Pancreas (tissue), 10 donors: ENCODE measurements at regions of chr18 and their contacts with region 1.

Region 1: DNA sequence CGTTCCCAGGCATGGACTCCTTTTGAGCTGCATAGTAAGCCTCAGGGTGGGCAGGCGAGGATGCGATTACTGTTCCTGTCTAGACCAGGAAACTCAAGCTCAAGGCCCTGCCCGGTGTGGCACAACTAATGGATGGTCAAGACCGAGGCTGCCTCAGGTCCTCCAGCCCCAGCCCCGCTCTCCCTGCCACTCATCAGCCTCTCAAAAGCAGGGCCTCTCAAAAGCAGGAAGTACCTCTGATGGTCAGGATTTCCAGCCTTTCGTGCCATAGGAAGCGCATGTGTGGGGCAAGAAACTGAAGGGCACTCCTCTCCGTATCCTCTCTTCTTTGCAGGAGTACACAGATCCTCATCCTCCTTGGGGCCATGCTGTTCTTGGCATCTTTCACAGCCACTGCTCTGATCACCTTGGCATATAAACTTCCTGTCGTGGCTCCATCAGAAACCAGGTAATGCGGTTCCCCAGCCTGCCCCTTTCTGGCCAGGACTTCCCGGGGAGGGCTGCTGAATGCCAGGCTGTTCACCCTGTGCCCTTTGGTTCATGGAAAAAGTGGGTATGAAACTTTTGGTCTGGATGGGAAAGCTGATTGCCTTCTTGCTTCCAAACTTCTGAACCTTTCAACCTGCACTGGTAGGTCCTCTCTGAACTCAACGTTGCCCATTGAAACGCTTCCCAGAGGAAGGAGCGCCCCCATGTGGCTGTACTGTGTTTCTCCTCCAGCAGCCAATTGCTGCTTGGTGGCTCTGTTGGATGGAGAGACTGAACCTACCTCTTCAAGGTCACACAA is 82.8 kb upstream of the SEC11C start:
- DNase-seq: peak in 4 of 6 donors; percentile 46 to 87 (median 62)
- ATAC-seq: peak in 3 of 4 donors; percentile 32 to 78 (median 69)
- H3K4me3 ChIP-seq: no peak overlapping the region
- H3K27ac ChIP-seq: peak overlapping the region in 1 of 4 donors; percentile 13
- H3K4me1 ChIP-seq: peaks cover 3 to 8% (median 5%) of the 10 kb centered on the region in 3 donors
- H3K27me3 ChIP-seq: no peaks in the 10 kb centered on the region
- CTCF ChIP-seq: peak; percentile 38 to 54 (median 52)

Region 2: DNA sequence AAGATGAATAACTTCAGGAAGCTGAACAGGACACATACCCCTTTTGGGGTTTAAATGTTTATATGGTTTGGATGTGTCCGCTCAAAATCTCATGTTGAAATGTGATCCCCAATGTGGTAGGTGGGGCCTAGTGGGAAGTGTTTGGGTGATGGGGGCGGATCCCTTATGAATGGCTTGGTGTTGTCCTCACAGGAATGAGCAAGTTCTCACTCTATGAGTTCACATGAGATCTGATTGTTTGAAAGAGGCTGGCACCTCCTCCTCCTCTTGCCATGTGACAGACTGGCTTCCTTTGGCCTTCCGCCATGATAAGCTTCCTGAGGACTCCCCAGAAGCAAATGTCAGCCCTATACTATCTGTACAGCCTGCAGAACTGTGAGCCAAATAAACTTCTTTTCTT is 280.8 kb before region 1 on chr18:
- intact Hi-C with region 1: loop called in 2 of 3 experiments (anchors 5 kb)
- DNase-seq: no peak
- ATAC-seq: no peak
- H3K4me3 ChIP-seq: no peak overlapping the region
- H3K27ac ChIP-seq: no peak overlapping the region
- H3K4me1 ChIP-seq: no peaks in the 10 kb centered on the region
- H3K27me3 ChIP-seq: no peaks in the 10 kb centered on the region
- CTCF ChIP-seq: no peak

Region 3: GRCh38 chr18:58781627-58782194 is 275.2 kb before region 1 on chr18:
- intact Hi-C with region 1: loop called in 2 of 3 experiments (anchors 5 kb)
- DNase-seq: peak; percentile 43 to 77 (median 64)
- ATAC-seq: peak; percentile 76 to 90 (median 87)
- H3K4me3 ChIP-seq: no peak overlapping the region
- H3K27ac ChIP-seq: no peak overlapping the region
- H3K4me1 ChIP-seq: peaks cover 0 to 3% (median 0%) of the 10 kb centered on the region in 3 donors
- H3K27me3 ChIP-seq: no peaks in the 10 kb centered on the region
- CTCF ChIP-seq: peak; percentile 71 to 90 (median 82)